ENCODE measurements at regions of chr3 and their contacts with region 1.

Region 1: DNA sequence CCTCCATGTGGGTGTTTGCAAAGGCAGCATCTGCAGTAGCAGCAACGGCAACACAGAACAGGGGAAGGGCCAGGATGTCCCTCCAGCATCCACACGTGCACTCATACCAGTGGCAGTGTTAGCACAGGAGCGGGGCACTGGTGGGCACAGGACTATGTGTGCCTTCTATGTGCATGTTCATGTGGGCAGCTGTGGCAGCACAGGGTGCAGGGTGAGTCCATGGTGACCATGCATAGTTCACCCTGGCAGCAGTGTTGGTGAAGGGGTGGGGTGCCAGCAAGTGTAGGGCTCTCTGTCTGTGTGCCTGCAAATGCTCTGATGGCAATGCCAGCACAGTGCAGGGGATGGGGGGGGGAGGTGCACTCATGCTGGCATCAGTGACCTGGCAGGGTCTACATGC is 222.1 kb upstream of the SOX14 start:
- DNase-seq: no peak
- H3K4me3 ChIP-seq: no peak overlapping the region
- H3K27ac ChIP-seq: no peak overlapping the region
- H3K4me1 ChIP-seq: no peaks in the 10 kb centered on the region
- H3K27me3 ChIP-seq: no peaks in the 10 kb centered on the region
- CTCF ChIP-seq: no peak
- EP300 ChIP-seq: no peak
- POLR2A ChIP-seq: no peak

Region 2: DNA sequence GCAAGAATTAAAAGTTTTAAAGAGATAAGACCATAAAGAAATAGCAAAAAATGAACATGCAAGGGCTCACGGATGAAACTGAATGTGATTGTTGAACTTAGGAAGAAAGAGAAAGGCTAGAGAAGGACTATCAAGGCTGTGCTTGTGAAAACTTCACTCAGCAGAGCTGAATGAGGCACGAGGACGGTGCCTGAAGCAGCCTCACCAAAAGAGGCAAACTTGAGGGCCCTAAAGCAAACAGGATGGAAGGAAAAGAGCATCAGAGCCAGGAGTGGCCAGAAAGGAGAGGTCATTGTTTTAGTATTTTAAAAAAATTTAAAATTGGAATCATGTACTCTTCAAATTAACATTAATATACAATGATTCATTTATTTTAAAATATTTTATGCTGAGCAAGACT is 30.9 kb after region 1 on chr3:
- intact Hi-C with region 1: loop called in 1 of 4 experiments (anchors 1 kb)
- DNase-seq: no peak
- H3K4me3 ChIP-seq: no peak overlapping the region
- H3K27ac ChIP-seq: no peak overlapping the region
- H3K4me1 ChIP-seq: no peaks in the 10 kb centered on the region
- H3K27me3 ChIP-seq: no peaks in the 10 kb centered on the region
- CTCF ChIP-seq: no peak
- EP300 ChIP-seq: no peak
- POLR2A ChIP-seq: no peak

Region 3: DNA sequence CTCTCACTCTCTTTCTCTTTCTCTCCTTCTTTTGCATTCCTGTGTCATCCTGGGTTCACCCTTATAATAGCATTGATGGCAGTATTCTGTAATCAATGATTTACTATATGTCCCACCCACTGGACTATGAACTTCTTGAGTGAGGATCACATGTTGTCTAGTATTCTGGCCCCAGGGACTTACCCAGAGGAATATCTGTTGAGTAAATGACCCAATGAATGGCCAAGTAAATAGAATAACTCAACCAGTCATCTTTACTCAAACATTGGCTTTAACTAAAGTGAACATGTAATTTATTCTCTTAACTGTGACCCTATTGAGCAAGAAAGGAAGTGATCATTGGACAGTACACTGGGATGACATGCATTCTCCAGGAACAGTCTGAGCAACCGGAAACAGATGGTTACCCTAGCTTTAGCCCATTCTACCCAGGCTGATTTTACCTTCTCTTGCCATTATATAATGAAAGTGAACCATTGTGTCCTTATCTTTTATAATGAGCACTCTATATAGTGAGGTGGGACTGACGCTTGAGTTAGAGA is 127.5 kb after region 1 on chr3:
- intact Hi-C with region 1: no loop called
- DNase-seq: no peak
- H3K4me3 ChIP-seq: no peak overlapping the region
- H3K27ac ChIP-seq: no peak overlapping the region
- H3K4me1 ChIP-seq: no peaks in the 10 kb centered on the region
- H3K27me3 ChIP-seq: no peaks in the 10 kb centered on the region
- CTCF ChIP-seq: no peak
- EP300 ChIP-seq: no peak
- POLR2A ChIP-seq: no peak